Transverse colon (tissue), 4 donors: ENCODE measurements at regions of chr1 and their contacts with region 1.

Region 1: DNA sequence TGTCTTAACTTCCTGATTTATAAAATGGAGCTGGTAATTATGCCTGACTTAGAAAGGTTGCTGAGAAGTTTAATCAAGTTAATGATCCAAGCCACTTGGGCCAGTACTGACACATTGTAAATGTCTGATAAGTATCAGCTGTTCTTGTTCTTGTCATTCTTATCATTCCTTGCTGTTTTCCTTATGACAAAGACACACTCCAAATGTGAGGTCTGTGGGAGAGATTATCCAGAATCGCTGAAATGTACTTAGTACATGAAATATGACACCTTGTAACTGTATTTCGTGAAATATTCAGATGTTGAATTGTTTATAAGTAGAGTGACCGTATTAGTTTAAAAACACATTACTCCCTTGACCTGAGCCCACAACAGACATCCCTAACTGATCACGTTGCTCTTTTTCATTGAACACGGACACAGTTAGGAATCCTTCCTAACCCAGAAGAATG is 6.1 kb downstream of the AADACL4 start:
- DNase-seq: no peak
- H3K4me3 ChIP-seq: no peak overlapping the region
- H3K27ac ChIP-seq: no peak overlapping the region
- H3K4me1 ChIP-seq: no peaks in the 10 kb centered on the region
- H3K27me3 ChIP-seq: no peaks in the 10 kb centered on the region
- CTCF ChIP-seq: no peak
- EP300 ChIP-seq: no peak
- POLR2A ChIP-seq: no peak

Region 2: GRCh38 chr1:10960411-10961299 is 1689.3 kb before region 1 on chr1:
- in situ Hi-C with region 1: no loop called
- intact Hi-C with region 1: loop called (anchors 5 kb)
- DNase-seq: peak; percentile 87
- H3K4me3 ChIP-seq: no peak overlapping the region
- H3K27ac ChIP-seq: no peak overlapping the region
- H3K4me1 ChIP-seq: peaks cover 0 to 9% (median 0%) of the 10 kb centered on the region in 4 donors
- H3K27me3 ChIP-seq: no peaks in the 10 kb centered on the region
- CTCF ChIP-seq: peak; percentile 84 to 92 (median 91)
- EP300 ChIP-seq: no peak
- POLR2A ChIP-seq: no peak

Region 3: DNA sequence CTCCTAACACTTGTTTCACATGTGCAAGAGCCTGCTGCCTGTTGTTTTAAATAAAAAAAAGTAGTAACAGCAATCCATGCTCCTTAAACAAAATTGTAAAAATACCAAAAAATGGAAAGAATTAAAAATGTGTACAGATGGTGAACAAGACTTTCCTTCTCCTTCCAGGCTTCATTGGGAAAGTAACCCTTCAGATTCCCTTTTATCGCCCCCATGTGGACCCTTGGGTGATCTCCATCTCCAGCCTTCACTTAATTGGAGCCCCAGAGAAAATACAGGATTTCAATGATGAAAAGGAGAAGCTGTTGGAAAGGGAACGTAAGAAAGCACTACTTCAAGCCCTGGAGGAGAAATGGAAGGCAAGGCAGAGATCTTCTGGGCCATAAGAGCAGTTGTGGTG is 405.9 kb before region 1 on chr1:
- in situ Hi-C with region 1: no loop called
- intact Hi-C with region 1: no loop called
- DNase-seq: no peak
- H3K4me3 ChIP-seq: no peak overlapping the region
- H3K27ac ChIP-seq: no peak overlapping the region
- H3K4me1 ChIP-seq: no peaks in the 10 kb centered on the region
- H3K27me3 ChIP-seq: no peaks in the 10 kb centered on the region
- CTCF ChIP-seq: peak in 2 of 5 experiments; percentile 15 to 17
- EP300 ChIP-seq: no peak
- POLR2A ChIP-seq: no peak

Region 4: DNA sequence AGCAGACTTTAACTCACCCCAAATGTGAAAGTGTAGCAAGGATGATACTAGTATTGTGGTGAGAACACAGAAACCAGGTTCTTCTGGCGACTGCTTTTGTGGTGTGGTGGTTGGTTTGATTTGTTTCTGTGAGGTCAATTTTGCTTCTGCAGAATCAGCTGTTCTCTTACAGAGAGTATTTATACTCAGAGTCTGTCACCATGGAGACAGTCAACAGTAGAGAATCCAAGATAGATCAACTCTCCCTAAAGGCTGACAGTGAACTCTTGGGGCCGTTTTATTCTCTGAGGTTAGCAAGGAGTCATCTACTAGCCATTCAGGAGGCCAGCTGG is 96.0 kb after region 1 on chr1 and contains the start of gene CFAP107:
- in situ Hi-C with region 1: no loop called
- intact Hi-C with region 1: no loop called
- DNase-seq: no peak
- H3K4me3 ChIP-seq: no peak within 1 kb of the TSS
- H3K27ac ChIP-seq: no peak within 1 kb of the TSS
- H3K4me1 ChIP-seq: no peaks in the 10 kb centered on the region
- H3K27me3 ChIP-seq: peaks cover 6% of the 10 kb centered on the region
- CTCF ChIP-seq: no peak
- EP300 ChIP-seq: no peak
- POLR2A ChIP-seq: no peak
- total RNA-seq, gene CFAP107: not detected